ENCODE measurements at regions of chr10 and their contacts with region 1.

Region 1: DNA sequence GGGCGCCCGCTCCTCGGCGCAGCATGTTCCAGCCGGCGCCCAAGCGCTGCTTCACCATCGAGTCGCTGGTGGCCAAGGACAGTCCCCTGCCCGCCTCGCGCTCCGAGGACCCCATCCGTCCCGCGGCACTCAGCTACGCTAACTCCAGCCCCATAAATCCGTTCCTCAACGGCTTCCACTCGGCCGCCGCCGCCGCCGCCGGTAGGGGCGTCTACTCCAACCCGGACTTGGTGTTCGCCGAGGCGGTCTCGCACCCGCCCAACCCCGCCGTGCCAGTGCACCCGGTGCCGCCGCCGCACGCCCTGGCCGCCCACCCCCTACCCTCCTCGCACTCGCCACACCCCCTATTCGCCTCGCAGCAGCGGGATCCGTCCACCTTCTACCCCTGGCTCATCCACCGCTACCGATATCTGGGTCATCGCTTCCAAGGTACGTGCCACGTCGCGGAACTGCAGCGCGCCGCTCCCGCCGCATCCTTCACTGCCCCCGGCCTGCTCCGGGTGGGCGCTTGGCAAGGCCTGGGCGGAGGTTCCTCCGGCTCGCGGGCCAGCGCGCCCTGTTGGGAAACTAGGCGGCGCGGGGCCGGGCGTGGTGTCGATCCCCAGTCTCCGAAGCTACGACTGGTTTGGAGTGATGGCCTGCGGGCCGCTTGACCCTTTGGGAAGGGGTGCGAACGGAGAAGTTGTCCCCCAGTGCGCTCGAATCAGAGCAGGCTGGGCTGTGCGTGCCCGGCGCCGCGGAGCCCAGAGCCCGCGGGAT is 878 bp downstream of the EMX2 start:
- DNase-seq: peak; percentile 68
- H3K4me3 Mint-ChIP-seq: peak overlapping the region; percentile 19
- H3K27ac Mint-ChIP-seq: peak overlapping the region; percentile 53
- H3K4me1 Mint-ChIP-seq: peaks cover 15% of the 10 kb centered on the region
- H3K27me3 Mint-ChIP-seq: peaks cover 83% of the 10 kb centered on the region

Region 2: GRCh38 chr10:117131376-117132327 is 411.8 kb before region 1 on chr10:
- intact Hi-C with region 1: loop called (anchors 2 kb)
- DNase-seq: no peak
- H3K4me3 Mint-ChIP-seq: peak overlapping the region; percentile 40
- H3K27ac Mint-ChIP-seq: peak overlapping the region; percentile 59
- H3K4me1 Mint-ChIP-seq: peaks cover 10% of the 10 kb centered on the region
- H3K27me3 Mint-ChIP-seq: peaks cover 68% of the 10 kb centered on the region

Region 3: GRCh38 chr10:117167789-117168674 is 375.4 kb before region 1 on chr10:
- intact Hi-C with region 1: loop called (anchors 5 kb)
- DNase-seq: peak; percentile 89
- H3K4me3 Mint-ChIP-seq: no peak overlapping the region
- H3K27ac Mint-ChIP-seq: no peak overlapping the region
- H3K4me1 Mint-ChIP-seq: peaks cover 8% of the 10 kb centered on the region
- H3K27me3 Mint-ChIP-seq: peaks cover 80% of the 10 kb centered on the region

Region 4: DNA sequence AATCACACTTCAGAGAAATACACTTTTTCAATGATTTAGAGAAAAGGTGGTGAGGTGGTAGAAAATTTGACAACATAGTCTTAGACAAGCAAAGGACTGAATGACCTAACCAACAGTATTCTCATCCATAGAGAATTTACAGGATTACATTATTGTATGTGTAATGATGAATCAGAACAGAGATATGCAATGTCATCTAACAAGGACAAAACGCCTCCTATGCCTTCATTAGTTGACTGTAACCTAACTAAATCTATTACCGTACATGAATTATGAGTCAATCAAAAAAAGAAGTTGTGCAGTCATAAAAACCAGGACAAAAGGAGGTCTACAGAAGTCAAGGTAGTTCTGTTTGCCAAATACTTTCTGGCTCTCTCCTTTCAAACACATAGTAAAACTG is 436.8 kb after region 1 on chr10:
- intact Hi-C with region 1: no loop called
- DNase-seq: no peak
- H3K4me3 Mint-ChIP-seq: no peak overlapping the region
- H3K27ac Mint-ChIP-seq: no peak overlapping the region
- H3K4me1 Mint-ChIP-seq: no peaks in the 10 kb centered on the region
- H3K27me3 Mint-ChIP-seq: peaks cover 11% of the 10 kb centered on the region

Region 5: DNA sequence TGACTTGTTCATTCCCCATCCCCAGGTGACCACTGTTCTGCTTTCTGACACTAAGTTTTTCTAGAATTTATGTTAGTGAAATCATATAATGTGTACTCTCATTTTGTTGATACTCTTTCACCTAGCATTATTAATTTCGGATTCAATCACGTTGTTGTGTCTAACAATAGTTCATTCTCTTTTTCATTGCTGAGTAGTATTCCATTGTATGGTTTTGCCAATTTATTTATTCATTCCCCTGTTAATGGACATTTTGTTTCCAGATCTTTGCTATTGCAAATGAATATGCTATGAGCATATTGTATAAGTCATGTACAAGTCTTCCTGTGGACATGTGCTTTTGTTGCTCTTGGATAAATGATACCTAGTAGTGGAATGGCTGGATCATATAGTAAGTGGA is 652.3 kb after region 1 on chr10:
- intact Hi-C with region 1: loop called (anchors 5 kb)
- DNase-seq: no peak
- H3K4me3 Mint-ChIP-seq: no peak overlapping the region
- H3K27ac Mint-ChIP-seq: no peak overlapping the region
- H3K4me1 Mint-ChIP-seq: no peaks in the 10 kb centered on the region
- H3K27me3 Mint-ChIP-seq: peaks cover 4% of the 10 kb centered on the region